ENCODE measurements at regions of chr12 and their contacts with region 1.

Region 1: GRCh38 chr12:62466594-62467491 is at the start of gene MON2:
- DNase-seq: peak; percentile 81 to 92 (median 84)
- ATAC-seq: peak; percentile 92 to 95
- H3K4me3 Mint-ChIP-seq: peak within 1 kb of the TSS; percentile 88 to 98 (median 92)
- H3K27ac Mint-ChIP-seq: peak within 1 kb of the TSS; percentile 93 to 98 (median 96)
- H3K4me1 Mint-ChIP-seq: peaks cover 9 to 31% (median 20%) of the 10 kb centered on the region in 4 donors
- H3K27me3 Mint-ChIP-seq: peaks cover 0 to 3% (median 0%) of the 10 kb centered on the region in 5 donors
- polyA plus RNA-seq, gene MON2: 11.3 to 18.5 (median 11.5) TPM

Region 2: DNA sequence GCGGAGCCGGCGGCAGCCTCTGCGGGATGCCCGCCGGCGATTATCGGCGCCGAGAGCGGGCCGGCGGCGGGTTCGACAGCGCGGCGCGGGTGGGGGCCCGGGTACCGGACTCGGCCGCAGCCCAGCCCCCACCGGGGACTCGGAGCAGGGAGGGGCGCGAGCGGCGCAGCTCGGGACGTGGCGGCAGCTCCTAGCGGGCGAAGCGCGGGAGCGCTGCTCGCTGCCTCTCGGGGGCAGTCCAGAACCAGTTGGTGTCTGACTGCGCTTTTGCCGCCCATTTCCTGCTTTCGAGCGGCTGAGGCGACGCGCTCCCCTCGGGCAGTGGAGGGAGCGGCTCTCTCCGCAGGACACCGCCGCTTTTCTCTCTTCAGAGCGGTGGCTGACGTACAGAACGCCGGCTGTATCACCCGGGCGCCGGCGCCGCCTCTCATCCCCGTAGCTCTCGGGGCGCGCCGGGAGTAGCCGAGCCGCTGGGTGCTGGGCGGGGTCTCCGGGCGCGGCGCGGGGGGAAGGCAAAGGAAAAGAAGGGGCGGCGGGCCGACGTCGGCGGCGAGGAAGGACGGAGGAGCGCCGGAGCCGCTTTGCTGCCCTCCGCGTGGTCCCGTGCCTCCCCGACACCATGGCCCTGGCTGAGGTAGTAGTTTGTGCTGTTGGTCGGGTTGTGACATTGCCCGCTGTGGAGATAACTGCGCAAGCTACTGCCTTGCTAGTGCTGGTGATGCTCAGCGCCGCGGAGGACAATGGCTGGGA is 136.4 kb after region 1 on chr12:
- POLR2A ChIA-PET with region 1: interaction called, 21 read pairs
- DNase-seq: peak; percentile 71 to 88 (median 78)
- ATAC-seq: peak; percentile 67 to 74
- H3K4me3 Mint-ChIP-seq: peak overlapping the region; percentile 87 to 98 (median 95)
- H3K27ac Mint-ChIP-seq: peak overlapping the region; percentile 98 to 100 (median 99)
- H3K4me1 Mint-ChIP-seq: peaks cover 7 to 41% (median 28%) of the 10 kb centered on the region in 4 donors
- H3K27me3 Mint-ChIP-seq: no peaks in the 10 kb centered on the region